Colonic mucosa (tissue), 4 donors: ENCODE measurements at regions of chr12 and their contacts with region 1.

Region 1: DNA sequence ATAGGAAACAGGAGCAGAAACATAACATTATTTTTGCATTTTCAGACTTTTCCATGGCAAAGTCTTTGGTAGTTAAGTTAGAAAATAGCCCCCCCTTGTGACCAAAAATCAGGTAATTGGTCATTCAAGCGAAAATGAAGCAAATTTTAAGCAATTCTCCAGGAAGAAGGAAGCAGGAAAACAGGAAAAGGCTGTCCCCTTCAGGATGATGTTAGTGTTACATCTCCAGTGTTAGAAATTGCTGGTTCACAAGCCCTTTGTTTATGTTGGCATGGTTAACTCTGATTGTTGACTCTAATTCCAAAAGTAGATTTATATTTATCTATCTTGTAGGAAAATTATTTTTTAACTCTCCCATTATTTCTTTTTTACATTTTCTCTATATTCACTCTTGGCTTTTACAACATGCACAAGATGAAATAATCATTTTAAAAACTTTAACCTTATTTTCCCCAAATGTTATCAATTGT is 18.8 kb upstream of the GAS2L3 start:
- DNase-seq: peak; percentile 44
- H3K4me3 ChIP-seq: no peak overlapping the region
- H3K27ac ChIP-seq: no peak overlapping the region
- H3K4me1 ChIP-seq: no peaks in the 10 kb centered on the region
- H3K27me3 ChIP-seq: no peaks in the 10 kb centered on the region
- CTCF ChIP-seq: peak; percentile 86

Region 2: DNA sequence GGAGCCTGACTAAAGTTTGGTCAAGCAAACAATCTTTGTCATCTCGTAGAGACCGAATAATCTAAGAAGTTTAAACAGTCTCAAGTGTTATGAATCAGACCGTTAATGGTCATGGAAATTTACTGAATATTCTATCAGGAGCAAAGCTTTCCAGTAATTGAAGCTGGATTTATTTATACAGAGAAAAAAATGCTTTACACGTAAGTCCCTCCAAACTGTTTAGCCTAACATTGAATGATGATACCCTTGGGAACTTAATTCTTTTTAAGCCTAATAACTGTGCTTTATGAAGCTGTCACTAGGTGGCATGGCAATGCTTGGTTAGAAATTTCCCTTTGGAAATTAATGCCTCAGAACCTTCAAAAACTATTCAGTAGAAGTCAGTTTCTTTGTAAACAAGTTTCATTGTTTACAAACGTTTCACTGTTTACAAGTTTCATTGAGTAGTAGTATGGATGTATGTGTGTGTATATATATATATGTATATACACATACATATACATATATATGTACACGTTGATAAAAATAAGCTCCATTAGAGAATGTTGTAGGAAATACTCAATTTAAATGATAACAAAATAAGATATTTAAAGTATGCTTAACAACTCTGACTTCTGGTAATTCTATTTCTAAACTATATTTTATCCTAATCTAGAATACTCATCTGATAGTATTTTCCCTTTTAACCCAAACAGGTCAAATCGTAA is 319.9 kb before region 1 on chr12:
- intact Hi-C with region 1: loop called (anchors 5 kb)
- DNase-seq: no peak
- H3K4me3 ChIP-seq: no peak overlapping the region
- H3K27ac ChIP-seq: no peak overlapping the region
- H3K4me1 ChIP-seq: no peaks in the 10 kb centered on the region
- H3K27me3 ChIP-seq: no peaks in the 10 kb centered on the region
- CTCF ChIP-seq: peak; percentile 74

Region 3: DNA sequence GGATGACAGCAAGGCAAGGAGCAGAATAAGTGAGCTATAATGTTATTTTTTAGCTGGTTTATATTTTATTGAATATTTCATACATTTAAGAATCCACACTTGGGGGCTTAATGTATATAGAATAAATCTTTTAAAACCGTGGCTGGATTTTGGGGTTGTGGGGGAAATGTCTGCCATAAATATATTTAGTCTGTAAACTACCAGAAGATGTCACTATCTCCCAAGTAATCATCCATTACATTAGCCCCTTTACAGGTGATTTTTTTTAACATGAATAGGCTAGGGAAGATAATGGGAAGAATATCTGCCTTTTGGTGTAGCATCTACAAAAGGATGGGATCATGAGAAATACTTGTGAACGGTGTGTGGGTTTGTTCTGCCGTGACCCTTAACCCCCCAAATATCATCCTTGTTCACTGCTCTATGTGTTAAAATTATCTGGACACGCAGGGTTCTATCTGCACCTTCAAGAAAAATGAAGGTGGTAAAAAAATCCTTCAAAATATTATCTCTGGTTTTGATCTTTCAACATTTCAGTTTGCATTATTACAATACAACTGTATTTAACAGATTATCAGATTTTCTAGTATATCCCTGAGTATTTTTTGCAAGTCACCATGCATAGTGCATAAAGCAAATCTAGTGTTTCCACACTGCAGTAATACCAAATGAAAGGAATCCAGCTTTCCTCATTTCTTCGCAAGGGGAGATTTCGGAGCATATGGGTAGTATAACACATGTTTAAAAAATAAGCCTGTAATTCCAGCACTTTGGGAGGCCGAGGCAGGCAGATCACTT is 205.8 kb before region 1 on chr12:
- intact Hi-C with region 1: loop called (anchors 5 kb)
- DNase-seq: no peak
- H3K4me3 ChIP-seq: no peak overlapping the region
- H3K27ac ChIP-seq: no peak overlapping the region
- H3K4me1 ChIP-seq: no peaks in the 10 kb centered on the region
- H3K27me3 ChIP-seq: no peaks in the 10 kb centered on the region
- CTCF ChIP-seq: peak; percentile 17

Region 4: GRCh38 chr12:100391856-100392255 is 162.8 kb before region 1 on chr12:
- intact Hi-C with region 1: loop called (anchors 5 kb)
- DNase-seq: peak; percentile 43
- H3K4me3 ChIP-seq: no peak overlapping the region
- H3K27ac ChIP-seq: no peak overlapping the region
- H3K4me1 ChIP-seq: no peaks in the 10 kb centered on the region
- H3K27me3 ChIP-seq: no peaks in the 10 kb centered on the region
- CTCF ChIP-seq: peak; percentile 40

Region 5: DNA sequence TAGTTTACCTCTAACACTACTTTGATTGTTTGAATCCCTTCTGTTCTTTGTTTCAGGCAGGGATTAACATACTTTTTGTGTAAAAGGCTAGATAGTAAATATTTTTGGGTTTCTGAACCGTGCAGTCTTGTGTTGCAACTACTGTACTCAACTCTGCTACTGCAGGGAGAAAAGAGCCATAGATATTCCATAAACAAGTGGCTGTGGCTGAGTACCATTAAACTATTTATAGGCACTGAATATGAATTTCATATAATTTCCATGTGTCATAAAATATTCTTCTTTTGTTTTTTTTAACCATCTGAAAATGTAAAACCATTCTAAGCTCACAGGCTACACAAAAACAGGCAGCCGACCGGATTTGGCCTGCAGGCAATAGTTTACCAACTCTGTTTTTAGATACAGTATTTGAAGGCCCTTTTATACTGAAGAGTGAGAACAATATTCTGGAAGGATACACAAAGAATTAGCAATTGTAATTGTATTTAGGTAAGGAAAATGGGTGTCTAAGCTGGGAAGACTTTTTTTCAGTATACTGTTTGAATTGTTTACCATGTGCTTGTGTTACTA is 65.3 kb before region 1 on chr12:
- intact Hi-C with region 1: no loop called
- DNase-seq: no peak
- H3K4me3 ChIP-seq: no peak overlapping the region
- H3K27ac ChIP-seq: no peak overlapping the region
- H3K4me1 ChIP-seq: peaks cover 6% of the 10 kb centered on the region
- H3K27me3 ChIP-seq: no peaks in the 10 kb centered on the region
- CTCF ChIP-seq: no peak